ENCODE measurements at regions of chr19 and their contacts with region 1.

Region 1: DNA sequence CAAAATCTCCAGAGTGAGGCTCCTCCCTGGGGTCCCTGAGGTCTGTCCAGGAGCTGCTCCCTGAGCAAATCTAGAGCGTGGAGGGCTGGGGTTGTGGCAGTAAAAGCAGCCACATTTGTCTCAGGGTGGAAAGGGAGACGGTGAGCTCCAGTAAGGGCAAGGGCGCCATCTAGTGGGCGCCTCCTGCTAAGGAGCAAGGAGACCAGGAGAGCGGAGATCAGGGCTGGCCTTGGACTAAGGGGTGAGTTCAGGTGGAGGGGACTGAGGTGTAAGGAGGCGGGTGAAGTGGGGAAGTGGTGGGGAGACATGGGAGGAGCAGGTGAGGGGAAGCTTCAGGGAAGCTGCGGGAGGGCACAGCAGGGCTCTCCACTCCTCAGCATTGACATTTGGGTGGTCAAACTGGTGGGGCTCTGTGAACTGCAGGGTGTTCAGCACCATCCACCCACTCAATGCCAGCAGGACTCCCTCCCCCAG is 5.3 kb upstream of the CEACAM21 start:
- DNase-seq: peak; percentile 73 to 85 (median 82)
- ATAC-seq: peak; percentile 99
- H3K4me3 ChIP-seq: no peak overlapping the region
- H3K4me3 Mint-ChIP-seq: peak overlapping the region in 4 of 10 donors; percentile 2 to 51 (median 26)
- H3K27ac ChIP-seq: no peak overlapping the region
- H3K27ac Mint-ChIP-seq: peak overlapping the region in 8 of 9 donors; percentile 8 to 89 (median 69)
- H3K4me1 ChIP-seq: peaks cover 13 to 35% of the 10 kb centered on the region in 2 donors
- H3K4me1 Mint-ChIP-seq: peaks cover 34 to 68% (median 47%) of the 10 kb centered on the region in 7 donors
- H3K27me3 ChIP-seq: no peaks in the 10 kb centered on the region
- H3K27me3 Mint-ChIP-seq: no peaks in the 10 kb centered on the region

Region 2: GRCh38 chr19:41206926-41207750 is 363.5 kb before region 1 on chr19:
- CTCF ChIA-PET with region 1: no interaction called
- POLR2A ChIA-PET with region 1: no interaction called
- intact Hi-C with region 1: loop called in 1 of 2 experiments (anchors 1 kb)
- DNase-seq: no peak
- ATAC-seq: no peak
- H3K4me3 ChIP-seq: no peak overlapping the region
- H3K4me3 Mint-ChIP-seq: no peak overlapping the region
- H3K27ac ChIP-seq: no peak overlapping the region
- H3K27ac Mint-ChIP-seq: peak overlapping the region in 6 of 9 donors; percentile 15 to 85 (median 54)
- H3K4me1 ChIP-seq: no peaks in the 10 kb centered on the region
- H3K4me1 Mint-ChIP-seq: peaks cover 3 to 12% (median 7%) of the 10 kb centered on the region in 7 donors
- H3K27me3 ChIP-seq: no peaks in the 10 kb centered on the region
- H3K27me3 Mint-ChIP-seq: no peaks in the 10 kb centered on the region

Region 3: GRCh38 chr19:41521931-41522555 is 48.6 kb before region 1 on chr19:
- CTCF ChIA-PET with region 1: interaction called, 3 read pairs
- POLR2A ChIA-PET with region 1: interaction called, 3 read pairs
- intact Hi-C with region 1: loop called (anchors 1 to 2 kb)
- DNase-seq: peak in 8 of 9 donors; percentile 31 to 50 (median 44)
- ATAC-seq: peak; percentile 69
- H3K4me3 ChIP-seq: peak overlapping the region; percentile 63
- H3K4me3 Mint-ChIP-seq: peak overlapping the region; percentile 85 to 95 (median 91)
- H3K27ac ChIP-seq: peak overlapping the region; percentile 73
- H3K27ac Mint-ChIP-seq: peak overlapping the region; percentile 85 to 97 (median 92)
- H3K4me1 ChIP-seq: peaks cover 6% of the 10 kb centered on the region in 2 donors
- H3K4me1 Mint-ChIP-seq: peaks cover 20 to 29% (median 25%) of the 10 kb centered on the region in 7 donors
- H3K27me3 ChIP-seq: no peaks in the 10 kb centered on the region
- H3K27me3 Mint-ChIP-seq: peaks cover 0 to 49% (median 17%) of the 10 kb centered on the region in 5 donors

Region 4: DNA sequence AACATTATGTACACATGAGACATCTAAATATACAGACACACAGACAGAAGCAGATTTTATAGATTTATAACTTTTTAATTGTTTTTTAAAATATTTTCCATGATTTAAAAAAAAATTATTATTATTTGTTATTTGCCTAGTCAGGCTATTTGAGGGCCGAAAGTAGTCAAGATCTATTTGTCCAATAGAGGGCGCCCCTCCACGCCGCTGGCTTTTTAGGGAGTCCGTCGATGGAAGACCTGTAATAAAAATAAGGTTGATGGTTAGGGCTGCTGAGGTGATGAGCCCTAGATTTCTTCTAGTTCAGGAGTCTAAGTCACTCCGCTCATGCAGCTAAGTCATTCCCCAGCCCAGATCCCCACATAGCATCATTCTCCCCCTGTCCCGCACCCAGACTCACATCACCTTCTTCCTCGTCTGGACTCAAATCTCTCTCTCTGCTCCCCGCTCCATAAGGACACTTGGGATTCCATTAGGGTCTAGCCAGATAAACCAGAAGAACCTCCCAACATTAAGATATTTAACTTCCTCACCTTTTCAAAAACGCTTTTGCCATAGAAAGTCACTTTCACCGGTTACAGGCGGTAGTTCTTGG is 28.6 kb before region 1 on chr19:
- CTCF ChIA-PET with region 1: interaction called, 384 read pairs
- POLR2A ChIA-PET with region 1: interaction called, 518 read pairs
- intact Hi-C with region 1: loop called (anchors 1 kb)
- DNase-seq: peak; percentile 53 to 71 (median 64)
- ATAC-seq: peak; percentile 59
- H3K4me3 ChIP-seq: no peak overlapping the region
- H3K4me3 Mint-ChIP-seq: peak overlapping the region; percentile 51 to 77 (median 62)
- H3K27ac ChIP-seq: peak overlapping the region; percentile 26
- H3K27ac Mint-ChIP-seq: peak overlapping the region; percentile 44 to 97 (median 88)
- H3K4me1 ChIP-seq: peaks cover 38 to 42% of the 10 kb centered on the region in 2 donors
- H3K4me1 Mint-ChIP-seq: peaks cover 38 to 57% (median 52%) of the 10 kb centered on the region in 7 donors
- H3K27me3 ChIP-seq: no peaks in the 10 kb centered on the region
- H3K27me3 Mint-ChIP-seq: no peaks in the 10 kb centered on the region

Region 5: GRCh38 chr19:41554907-41555306 is 15.8 kb before region 1 on chr19:
- CTCF ChIA-PET with region 1: interaction called, 384 read pairs
- POLR2A ChIA-PET with region 1: interaction called, 518 read pairs
- intact Hi-C with region 1: no loop called
- DNase-seq: peak in 7 of 9 donors; percentile 62 to 78 (median 73)
- ATAC-seq: peak; percentile 88
- H3K4me3 ChIP-seq: peak overlapping the region; percentile 77
- H3K4me3 Mint-ChIP-seq: peak overlapping the region; percentile 39 to 100 (median 97)
- H3K27ac ChIP-seq: peak overlapping the region; percentile 88
- H3K27ac Mint-ChIP-seq: peak overlapping the region; percentile 25 to 97 (median 95)
- H3K4me1 ChIP-seq: peaks cover 50 to 65% of the 10 kb centered on the region in 2 donors
- H3K4me1 Mint-ChIP-seq: peaks cover 43 to 76% (median 69%) of the 10 kb centered on the region in 7 donors
- H3K27me3 ChIP-seq: no peaks in the 10 kb centered on the region
- H3K27me3 Mint-ChIP-seq: no peaks in the 10 kb centered on the region